ENCODE measurements at regions of chr21 and their contacts with region 1.

Region 1: GRCh38 chr21:32412162-32413014 is at the start of gene EVA1C:
- DNase-seq: peak; percentile 51 to 58
- ATAC-seq: peak; percentile 70 to 80
- H3K4me3 ChIP-seq: peak within 1 kb of the TSS; percentile 58
- H3K27ac ChIP-seq: peak within 1 kb of the TSS; percentile 98 to 100
- H3K4me1 ChIP-seq: peaks cover 35% of the 10 kb centered on the region
- CTCF ChIP-seq: no peak
- EP300 ChIP-seq: peak in 1 of 2 experiments; percentile 42; a peak in 1 of 5 replicates
- POLR2A ChIP-seq: peak; percentile 37
- RAD21 ChIP-seq: no peak
- polyA plus RNA-seq, gene EVA1C: 41.1 and 45.5 TPM in 2 replicates

Region 2: GRCh38 chr21:32427958-32428623 is 15.7 kb after region 1 on chr21:
- CTCF ChIA-PET with region 1: interaction called, 10 read pairs
- POLR2A ChIA-PET with region 1: interaction called, 3 read pairs
- DNase-seq: no peak
- ATAC-seq: no peak
- H3K4me3 ChIP-seq: no peak overlapping the region
- H3K27ac ChIP-seq: peak overlapping the region; percentile 56 to 83; a peak in 5 of 6 replicates
- H3K4me1 ChIP-seq: peaks cover 70% of the 10 kb centered on the region
- CTCF ChIP-seq: no peak
- EP300 ChIP-seq: no peak
- POLR2A ChIP-seq: no peak
- RAD21 ChIP-seq: no peak

Region 3: DNA sequence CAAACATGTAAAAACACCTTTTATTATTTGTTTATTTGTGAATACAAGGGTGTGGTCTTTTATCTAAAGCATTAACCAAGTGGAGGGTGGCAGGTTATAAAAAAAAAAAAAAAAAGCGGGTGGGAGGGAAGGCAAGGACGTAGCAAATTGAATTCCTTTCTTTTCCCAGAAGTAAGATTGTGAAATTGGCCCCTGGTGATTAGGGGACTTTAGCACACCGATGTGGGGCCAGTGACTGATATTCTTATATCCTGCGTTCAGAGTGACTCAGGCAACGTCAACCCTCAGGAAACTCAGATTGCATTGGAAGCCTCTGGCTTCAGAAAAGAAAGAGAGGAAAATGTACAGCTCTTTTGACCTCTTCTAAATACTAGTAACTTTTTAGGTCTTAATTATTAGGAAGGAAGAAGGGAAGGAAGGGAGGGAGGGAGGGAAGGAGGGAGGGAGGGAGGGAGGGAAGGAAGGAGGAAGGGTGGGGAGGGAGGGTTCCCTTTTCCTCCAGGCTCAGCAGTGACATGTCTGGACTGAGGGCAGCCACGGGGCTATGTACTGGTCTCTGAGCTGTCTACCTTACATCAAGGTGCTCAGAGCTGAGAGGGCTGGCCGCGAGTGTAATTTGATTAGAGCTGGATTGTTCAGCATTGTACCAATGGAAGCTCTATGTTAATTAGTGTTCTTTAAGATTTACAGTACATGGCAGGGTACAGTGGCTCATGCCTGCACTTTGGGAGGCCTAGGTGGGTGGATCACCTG is 30.4 kb after region 1 on chr21:
- CTCF ChIA-PET with region 1: no interaction called
- POLR2A ChIA-PET with region 1: no interaction called
- DNase-seq: peak in 1 of 2 experiments; percentile 63
- ATAC-seq: peak; percentile 63 to 92
- H3K4me3 ChIP-seq: 0 out of 3 replicates have a peak overlapping the region, but pooled peaks have one; percentile 22
- H3K27ac ChIP-seq: peak overlapping the region; percentile 89 to 90
- H3K4me1 ChIP-seq: peaks cover 52% of the 10 kb centered on the region
- CTCF ChIP-seq: no peak
- EP300 ChIP-seq: peak; percentile 44 to 83; a peak in 3 of 5 replicates
- POLR2A ChIP-seq: no peak
- RAD21 ChIP-seq: no peak

Region 4: DNA sequence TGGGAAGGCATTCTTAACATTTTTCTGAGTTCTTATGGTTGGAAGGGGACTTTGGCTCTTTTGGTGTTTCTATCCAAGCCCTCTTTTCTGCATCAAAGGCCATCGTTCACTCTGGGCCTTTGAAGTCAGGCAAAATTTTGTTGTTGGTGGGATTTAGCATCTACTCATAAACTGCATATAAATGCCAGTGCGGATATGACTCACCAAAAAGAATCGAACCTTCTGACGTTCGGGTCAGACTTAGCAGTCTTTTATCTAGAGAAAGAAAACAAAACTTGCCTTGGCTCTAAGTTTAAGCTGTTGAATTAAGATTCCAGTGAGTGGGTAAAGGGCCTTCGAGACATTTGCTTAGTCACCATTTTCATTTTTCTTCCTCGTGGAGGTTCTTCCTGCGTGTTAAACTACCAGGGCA is 51.5 kb after region 1 on chr21:
- CTCF ChIA-PET with region 1: interaction called, 14 read pairs
- POLR2A ChIA-PET with region 1: interaction called, 3 read pairs
- DNase-seq: peak in 1 of 2 experiments; percentile 90
- ATAC-seq: peak; percentile 81 to 85
- H3K4me3 ChIP-seq: no peak overlapping the region
- H3K27ac ChIP-seq: peak overlapping the region; percentile 97 to 99
- H3K4me1 ChIP-seq: peaks cover 76% of the 10 kb centered on the region
- CTCF ChIP-seq: no peak
- EP300 ChIP-seq: peak; percentile 57 to 88; a peak in 4 of 5 replicates
- POLR2A ChIP-seq: no peak
- RAD21 ChIP-seq: no peak

Region 5: DNA sequence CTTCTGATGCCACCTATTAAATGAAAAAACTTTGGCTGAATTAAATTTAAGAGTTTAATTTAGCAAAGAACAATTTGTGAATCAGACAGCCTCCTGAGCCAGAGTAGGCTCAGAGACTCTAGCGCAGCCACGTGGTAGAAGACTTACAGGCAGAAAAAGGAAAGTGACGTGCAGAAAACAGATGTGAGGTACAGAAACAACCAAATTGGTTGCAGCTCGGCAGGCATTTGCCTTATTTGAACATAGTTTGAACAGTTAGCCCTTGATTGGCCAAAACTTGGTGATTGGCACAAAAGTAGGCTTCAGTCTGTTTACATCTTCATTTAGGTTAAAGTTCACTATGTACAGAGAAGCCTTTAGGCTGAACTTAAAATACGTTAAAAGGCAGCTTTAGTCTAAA is 150.0 kb after region 1 on chr21:
- CTCF ChIA-PET with region 1: interaction called, 13 read pairs
- POLR2A ChIA-PET with region 1: no interaction called
- DNase-seq: no peak
- ATAC-seq: no peak
- H3K4me3 ChIP-seq: no peak overlapping the region
- H3K27ac ChIP-seq: no peak overlapping the region
- H3K4me1 ChIP-seq: no peaks in the 10 kb centered on the region
- CTCF ChIP-seq: no peak
- EP300 ChIP-seq: no peak
- POLR2A ChIP-seq: no peak
- RAD21 ChIP-seq: no peak

Region 6: GRCh38 chr21:32569261-32570230 is 157.2 kb after region 1 on chr21:
- CTCF ChIA-PET with region 1: interaction called, 18 read pairs
- POLR2A ChIA-PET with region 1: no interaction called
- DNase-seq: peak; percentile 66 to 80
- ATAC-seq: peak; percentile 97 to 98
- H3K4me3 ChIP-seq: peak overlapping the region; percentile 66
- H3K27ac ChIP-seq: peak overlapping the region; percentile 94 to 95
- H3K4me1 ChIP-seq: 0 out of 3 replicates have a peak, but pooled peaks cover 8% of the 10 kb centered on the region
- CTCF ChIP-seq: peak; percentile 76
- EP300 ChIP-seq: no peak
- POLR2A ChIP-seq: peak; percentile 36; the same call in 1 of the 2 replicates
- RAD21 ChIP-seq: peak; percentile 49 to 57

Region 7: DNA sequence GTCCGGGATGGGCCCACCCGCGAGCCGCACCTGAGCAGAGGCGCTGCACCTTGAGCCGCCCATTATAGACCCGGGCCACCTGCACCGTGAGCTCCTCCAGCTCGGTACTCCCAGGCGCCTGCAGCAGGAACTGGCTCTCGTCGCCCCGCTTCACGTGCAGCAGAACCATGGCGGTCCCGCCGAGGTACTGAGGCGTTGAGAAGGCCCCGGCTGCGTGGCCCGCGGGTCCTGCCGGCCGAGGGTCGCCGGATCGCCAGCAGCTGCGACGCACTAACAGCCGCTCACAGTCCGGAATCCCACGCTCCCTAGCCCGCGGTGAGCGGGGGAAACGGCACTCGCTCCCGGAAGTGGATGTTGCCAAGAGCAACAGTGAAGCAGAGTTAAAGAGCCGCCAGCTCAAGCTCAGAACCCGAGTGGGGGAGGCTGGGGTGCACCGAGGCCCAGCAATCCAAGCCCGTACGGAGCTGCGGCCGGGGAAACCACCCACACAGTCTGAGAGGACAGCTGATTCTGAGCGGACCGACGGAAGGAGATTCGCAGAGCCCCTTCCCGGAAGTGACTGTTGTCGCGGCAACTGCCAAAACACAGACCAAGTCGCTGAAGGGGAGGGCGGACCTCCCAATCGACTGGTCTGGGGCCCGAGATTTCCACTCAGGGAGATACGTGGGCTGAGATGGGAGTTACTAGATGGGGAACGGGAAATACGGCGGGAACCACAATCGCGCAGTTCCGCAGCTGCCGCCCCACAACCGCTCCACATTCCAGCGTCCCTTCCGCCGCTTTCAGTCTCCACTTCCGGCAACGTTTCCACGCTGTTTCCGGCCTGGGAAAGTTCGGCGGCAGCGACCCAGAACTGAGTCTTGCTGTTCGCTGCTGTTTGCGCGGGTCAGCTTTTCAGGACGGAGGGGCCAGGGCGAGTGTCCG is 199.9 kb after region 1 on chr21 and contains the start of gene CFAP298:
- CTCF ChIA-PET with region 1: interaction called, 10 read pairs
- POLR2A ChIA-PET with region 1: no interaction called
- DNase-seq: peak; percentile 73 to 92
- ATAC-seq: peak; percentile 98
- H3K4me3 ChIP-seq: peak within 1 kb of the TSS; percentile 54
- H3K27ac ChIP-seq: peak within 1 kb of the TSS; percentile 89 to 99
- H3K4me1 ChIP-seq: 0 out of 3 replicates have a peak, but pooled peaks cover 8% of the 10 kb centered on the region
- CTCF ChIP-seq: no peak
- EP300 ChIP-seq: no peak
- POLR2A ChIP-seq: peak; percentile 75
- RAD21 ChIP-seq: no peak
- polyA plus RNA-seq, gene CFAP298: 22.2 and 35.6 TPM in 2 replicates

Measured in A549 (cell line).